MCF 10A (cell line): ENCODE measurements at regions of chr2 and their contacts with region 1.

Region 1: GRCh38 chr2:43519643-43520221 is 76.1 kb downstream of the THADA start:
- DNase-seq: peak; percentile 84
- H3K4me3 Mint-ChIP-seq: peak overlapping the region; percentile 41
- H3K27ac Mint-ChIP-seq: peak overlapping the region; percentile 71
- H3K4me1 Mint-ChIP-seq: peaks cover 47% of the 10 kb centered on the region
- H3K27me3 Mint-ChIP-seq: no peaks in the 10 kb centered on the region
- CTCF ChIP-seq: no peak

Region 2: DNA sequence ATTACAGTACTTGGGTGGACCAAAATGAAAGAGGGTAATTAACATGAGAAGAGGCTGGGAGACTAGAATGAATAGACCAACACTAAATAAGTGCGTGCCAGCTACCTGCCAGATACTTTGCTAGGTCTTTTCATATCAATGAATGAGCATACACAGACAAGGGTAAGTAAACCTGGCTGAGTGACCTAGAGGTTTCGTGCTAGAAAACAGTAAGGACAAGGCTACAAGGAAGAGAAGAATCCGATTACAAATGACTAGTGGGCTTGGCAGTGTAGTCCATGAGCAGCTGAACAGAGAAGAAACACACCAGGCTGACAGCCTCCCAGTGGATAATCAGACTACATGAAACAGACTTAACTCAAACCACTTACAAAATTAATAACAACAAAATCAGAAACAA is 11.5 kb after region 1 on chr2:
- CTCF ChIA-PET with region 1: interaction called, 3 read pairs
- POLR2A ChIA-PET with region 1: interaction called, 141 read pairs
- intact Hi-C with region 1: no loop called
- DNase-seq: no peak
- H3K4me3 Mint-ChIP-seq: no peak overlapping the region
- H3K27ac Mint-ChIP-seq: no peak overlapping the region
- H3K4me1 Mint-ChIP-seq: peaks cover 6% of the 10 kb centered on the region
- H3K27me3 Mint-ChIP-seq: no peaks in the 10 kb centered on the region
- CTCF ChIP-seq: no peak

Region 3: DNA sequence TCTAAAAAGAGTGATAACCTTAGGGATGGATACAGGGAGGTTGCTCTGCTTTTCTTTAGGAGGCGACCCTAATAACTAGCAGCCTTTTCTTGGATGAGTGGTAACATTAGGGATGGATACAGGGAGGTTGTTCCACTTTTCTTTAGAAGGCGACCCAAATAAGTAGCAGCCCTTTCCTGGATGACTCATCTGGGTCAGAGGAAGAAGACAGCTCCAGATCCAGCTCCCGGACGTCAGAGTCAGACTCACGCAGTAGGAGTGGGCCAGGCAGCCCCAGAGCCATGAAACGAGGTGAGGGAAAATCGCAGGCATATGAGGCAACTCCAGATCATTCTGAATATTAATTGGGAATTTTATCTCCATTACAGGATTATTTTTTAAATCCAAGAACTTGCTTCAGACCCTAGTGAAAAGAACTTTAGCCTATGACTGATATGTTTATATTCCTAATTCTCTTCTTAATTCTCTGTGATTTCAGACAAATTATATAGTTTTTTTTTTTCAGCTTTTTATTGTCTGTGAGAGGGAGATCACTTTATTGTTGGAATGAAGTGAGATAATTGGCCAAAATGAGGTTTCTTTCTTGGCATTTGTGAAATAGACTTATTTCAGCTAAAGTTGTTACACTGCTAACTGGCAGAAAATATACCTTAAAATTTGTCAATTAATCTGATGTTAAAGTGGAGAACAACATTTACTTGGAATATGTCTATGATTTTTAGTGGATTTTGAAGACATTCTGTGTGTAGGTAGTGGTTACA is 187.7 kb after region 1 on chr2:
- CTCF ChIA-PET with region 1: no interaction called
- POLR2A ChIA-PET with region 1: no interaction called
- intact Hi-C with region 1: no loop called
- DNase-seq: peak; percentile 71
- H3K4me3 Mint-ChIP-seq: no peak overlapping the region
- H3K27ac Mint-ChIP-seq: peak overlapping the region; percentile 21
- H3K4me1 Mint-ChIP-seq: peaks cover 15% of the 10 kb centered on the region
- H3K27me3 Mint-ChIP-seq: no peaks in the 10 kb centered on the region
- CTCF ChIP-seq: no peak